ENCODE measurements at regions of chr22 and their contacts with region 1.

Region 1: DNA sequence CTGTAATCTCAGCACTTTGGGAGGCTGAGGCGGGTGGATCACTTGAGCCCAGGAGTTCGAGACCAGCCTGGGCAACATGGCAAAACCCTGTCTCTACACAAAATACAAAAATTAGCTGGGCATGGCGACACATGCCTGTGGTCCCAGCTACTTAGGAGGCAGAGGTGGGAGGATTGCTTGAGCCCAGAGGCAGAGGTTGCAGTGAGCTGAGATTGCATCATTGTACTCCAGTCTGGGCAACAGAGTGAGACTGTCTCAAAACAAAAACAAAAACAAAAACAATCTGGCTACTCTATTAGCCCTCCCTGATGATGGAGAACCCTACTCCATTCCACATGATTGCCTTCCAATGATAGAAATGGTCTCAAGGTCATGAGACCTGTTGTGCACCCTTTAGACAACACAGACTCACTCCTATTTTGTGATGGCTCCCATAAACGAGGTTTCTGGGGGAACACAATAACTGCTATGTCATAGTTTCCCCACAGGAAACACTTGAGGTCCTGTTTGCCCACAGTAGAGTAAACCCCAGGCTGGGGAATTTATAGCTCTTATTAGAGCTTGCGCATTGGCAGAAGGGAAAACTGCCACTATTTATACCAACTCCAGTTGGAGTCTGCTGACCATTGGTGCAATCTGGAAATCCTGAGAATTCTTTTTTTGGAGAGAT is 28.6 kb downstream of the MIF start:
- ATAC-seq: no peak
- H3K4me3 ChIP-seq: no peak overlapping the region
- H3K27ac ChIP-seq: no peak overlapping the region
- H3K4me1 ChIP-seq: no peaks in the 10 kb centered on the region

Region 2: GRCh38 chr22:23970816-23971486 is 48.2 kb after region 1 on chr22:
- in situ Hi-C with region 1: loop called in 1 of 9 experiments (anchors 10 kb)
- ATAC-seq: no peak
- H3K4me3 ChIP-seq: no peak overlapping the region
- H3K27ac ChIP-seq: no peak overlapping the region
- H3K4me1 ChIP-seq: no peaks in the 10 kb centered on the region

Measured in motor neuron (in vitro differentiated cells).